ENCODE measurements at regions of chr7 and their contacts with region 1.

Region 1: DNA sequence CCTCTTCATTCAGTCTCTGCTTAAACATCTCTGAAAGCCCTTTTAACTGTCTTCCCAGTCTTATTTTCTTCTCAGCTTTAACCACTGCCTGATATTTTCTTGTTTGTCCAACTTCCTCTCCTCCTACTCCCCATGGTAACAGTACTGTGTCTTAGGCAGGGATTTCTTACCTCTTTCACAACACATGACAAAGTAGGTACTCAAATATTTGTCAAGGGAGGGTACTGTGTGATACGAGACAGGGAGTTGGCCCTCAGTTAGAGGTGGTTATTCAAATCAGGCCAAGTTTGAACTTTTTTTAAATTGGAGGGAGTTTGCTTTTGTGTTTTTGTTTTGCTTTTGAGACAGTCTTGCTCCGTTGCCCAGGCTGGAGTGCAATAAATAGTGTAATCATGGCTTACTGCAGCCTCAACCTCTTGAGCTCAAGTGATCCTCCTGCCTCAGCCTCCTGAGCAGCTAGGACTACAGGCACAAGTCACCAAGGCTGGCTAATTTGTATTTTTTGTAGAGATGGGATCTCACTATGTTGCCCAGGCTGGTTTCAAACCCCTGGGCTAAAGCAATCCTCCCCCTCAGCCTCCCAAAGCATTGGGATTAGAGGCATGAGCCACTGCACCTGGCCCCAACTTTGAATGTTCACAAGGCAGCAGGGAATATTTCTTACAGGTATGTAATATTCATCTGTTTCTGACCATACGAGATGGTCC is 2.5 kb upstream of the KPNA7 start:
- DNase-seq: peak; percentile 65
- ATAC-seq: 0 out of 2 replicates have a peak, but pooled peaks have one; percentile 9
- H3K4me3 ChIP-seq: no peak overlapping the region
- H3K27ac ChIP-seq: peak overlapping the region; percentile 66
- H3K4me1 ChIP-seq: peaks cover 14% of the 10 kb centered on the region
- H3K27me3 ChIP-seq: no peaks in the 10 kb centered on the region
- CTCF ChIP-seq: no peak

Region 2: GRCh38 chr7:99167072-99167471 is 43.3 kb before region 1 on chr7:
- CTCF ChIA-PET with region 1: no interaction called
- POLR2A ChIA-PET with region 1: interaction called, 10 read pairs
- in situ Hi-C with region 1: no loop called
- intact Hi-C with region 1: no loop called
- DNase-seq: no peak
- ATAC-seq: no peak
- H3K4me3 ChIP-seq: no peak overlapping the region
- H3K27ac ChIP-seq: no peak overlapping the region
- H3K4me1 ChIP-seq: no peaks in the 10 kb centered on the region
- H3K27me3 ChIP-seq: no peaks in the 10 kb centered on the region
- CTCF ChIP-seq: no peak

Region 3: DNA sequence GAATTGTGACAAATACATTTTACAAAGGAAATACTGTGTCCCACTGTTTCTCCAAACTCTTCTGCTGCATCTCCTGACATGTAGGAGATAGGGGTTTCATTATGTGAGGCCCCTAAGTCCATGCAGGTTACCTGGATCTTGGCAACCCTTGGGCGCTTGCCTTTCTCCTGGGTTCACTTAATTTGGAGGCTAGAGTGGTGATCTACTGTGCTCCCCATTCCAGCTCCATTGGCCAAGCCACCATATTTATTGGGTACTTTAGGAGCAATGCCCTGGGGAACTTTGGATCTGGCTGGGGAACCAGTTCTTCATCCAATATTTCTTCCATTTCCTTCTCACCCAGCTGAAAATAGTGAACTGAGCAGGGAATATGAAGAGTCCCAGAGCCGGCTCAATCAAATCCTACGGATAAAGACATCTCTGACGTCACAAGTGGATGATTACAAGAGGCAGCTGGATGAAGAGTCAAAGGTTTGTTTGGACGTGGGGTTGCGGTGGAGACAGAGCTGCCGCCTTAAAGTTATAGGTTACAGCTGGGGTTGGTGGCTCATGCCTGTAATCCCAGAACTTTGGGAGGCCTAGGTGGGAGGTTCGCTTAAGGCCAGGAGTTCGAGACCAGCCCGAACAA is 80.7 kb after region 1 on chr7:
- CTCF ChIA-PET with region 1: no interaction called
- POLR2A ChIA-PET with region 1: interaction called, 11 read pairs
- in situ Hi-C with region 1: no loop called
- intact Hi-C with region 1: no loop called
- DNase-seq: no peak
- ATAC-seq: no peak
- H3K4me3 ChIP-seq: no peak overlapping the region
- H3K27ac ChIP-seq: no peak overlapping the region
- H3K4me1 ChIP-seq: no peaks in the 10 kb centered on the region
- H3K27me3 ChIP-seq: no peaks in the 10 kb centered on the region
- CTCF ChIP-seq: no peak

Region 4: DNA sequence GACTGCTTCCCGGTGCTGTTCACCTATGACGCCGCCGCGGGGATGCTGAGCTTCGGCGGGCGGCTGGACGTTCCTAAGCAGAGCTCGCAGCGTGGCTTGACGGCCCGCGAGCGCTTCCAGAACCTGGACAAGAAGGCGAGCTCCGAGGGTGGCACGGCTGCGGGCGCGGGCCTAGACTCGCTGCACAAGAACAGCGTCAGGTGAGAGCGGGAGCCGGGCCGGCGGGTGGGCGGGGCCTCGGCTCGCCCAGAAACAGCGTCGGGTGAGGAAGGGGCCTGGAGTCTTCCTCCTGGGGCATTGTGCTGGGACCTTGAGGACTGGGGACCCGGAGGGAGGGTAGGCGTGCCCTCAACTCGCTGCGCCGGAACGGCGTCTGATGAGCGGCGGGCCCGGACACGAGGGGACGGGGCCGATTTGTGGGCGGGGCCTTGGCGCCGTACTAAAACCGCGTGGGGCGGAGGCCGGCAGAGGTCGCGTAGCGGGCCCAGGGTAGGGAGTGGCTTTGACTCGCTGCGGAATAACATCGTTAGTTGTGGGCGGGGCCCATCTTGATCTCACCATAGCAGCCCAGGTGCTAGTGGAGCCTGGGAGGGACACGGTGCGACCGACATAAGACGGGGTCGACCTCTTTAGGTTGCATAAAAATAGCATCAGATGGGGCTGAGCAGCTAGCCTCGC is 182.4 kb after region 1 on chr7:
- CTCF ChIA-PET with region 1: no interaction called
- POLR2A ChIA-PET with region 1: no interaction called
- in situ Hi-C with region 1: no loop called
- intact Hi-C with region 1: no loop called
- DNase-seq: no peak
- ATAC-seq: peak; percentile 65
- H3K4me3 ChIP-seq: peak overlapping the region in 1 of 2 experiments; percentile 7; a peak in 1 of 4 replicates
- H3K27ac ChIP-seq: peak overlapping the region; percentile 53
- H3K4me1 ChIP-seq: peaks cover 49% of the 10 kb centered on the region
- H3K27me3 ChIP-seq: no peaks in the 10 kb centered on the region
- CTCF ChIP-seq: no peak

Measured in Panc1 (cell line).